ENCODE measurements at regions of chr4 and their contacts with region 1.

Region 1: DNA sequence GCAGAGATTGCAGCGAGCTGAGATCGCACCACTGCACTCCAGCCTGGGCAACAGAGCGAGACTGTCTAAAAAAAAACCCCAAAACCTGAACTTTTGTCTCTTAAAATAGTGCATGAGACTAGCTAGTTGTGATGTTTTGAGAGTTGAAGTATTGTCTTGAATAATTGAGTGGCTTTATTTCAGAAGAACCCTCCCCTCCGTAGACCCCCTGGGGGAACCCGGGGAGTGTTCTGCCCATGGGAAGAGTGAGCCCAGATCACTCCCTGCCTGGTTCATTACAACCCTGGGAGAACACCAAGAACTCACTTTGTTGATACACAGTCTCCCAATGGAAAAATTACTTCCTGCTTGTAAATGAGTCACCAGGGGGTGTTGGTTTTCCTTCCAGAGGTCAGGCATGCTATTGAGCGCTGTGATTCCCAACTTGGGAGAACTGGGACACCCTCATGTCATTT is 65.3 kb upstream of the SHISA3 start:
- DNase-seq: no peak
- ATAC-seq: no peak
- H3K4me3 ChIP-seq: no peak overlapping the region
- H3K4me3 Mint-ChIP-seq: no peak overlapping the region
- H3K27ac ChIP-seq: no peak overlapping the region
- H3K27ac Mint-ChIP-seq: no peak overlapping the region
- H3K4me1 ChIP-seq: no peaks in the 10 kb centered on the region
- H3K4me1 Mint-ChIP-seq: no peaks in the 10 kb centered on the region
- H3K27me3 ChIP-seq: no peaks in the 10 kb centered on the region
- H3K27me3 Mint-ChIP-seq: peaks cover 0 to 9% of the 10 kb centered on the region in 2 donors

Region 2: GRCh38 chr4:42074294-42074693 is 257.6 kb before region 1 on chr4:
- CTCF ChIA-PET with region 1: no interaction called
- POLR2A ChIA-PET with region 1: interaction called in 1 of 2 experiments, 12 read pairs
- DNase-seq: no peak
- ATAC-seq: no peak
- H3K4me3 ChIP-seq: no peak overlapping the region
- H3K4me3 Mint-ChIP-seq: no peak overlapping the region
- H3K27ac ChIP-seq: no peak overlapping the region
- H3K27ac Mint-ChIP-seq: no peak overlapping the region
- H3K4me1 ChIP-seq: no peaks in the 10 kb centered on the region
- H3K4me1 Mint-ChIP-seq: no peaks in the 10 kb centered on the region
- H3K27me3 ChIP-seq: no peaks in the 10 kb centered on the region
- H3K27me3 Mint-ChIP-seq: no peaks in the 10 kb centered on the region

Region 3: DNA sequence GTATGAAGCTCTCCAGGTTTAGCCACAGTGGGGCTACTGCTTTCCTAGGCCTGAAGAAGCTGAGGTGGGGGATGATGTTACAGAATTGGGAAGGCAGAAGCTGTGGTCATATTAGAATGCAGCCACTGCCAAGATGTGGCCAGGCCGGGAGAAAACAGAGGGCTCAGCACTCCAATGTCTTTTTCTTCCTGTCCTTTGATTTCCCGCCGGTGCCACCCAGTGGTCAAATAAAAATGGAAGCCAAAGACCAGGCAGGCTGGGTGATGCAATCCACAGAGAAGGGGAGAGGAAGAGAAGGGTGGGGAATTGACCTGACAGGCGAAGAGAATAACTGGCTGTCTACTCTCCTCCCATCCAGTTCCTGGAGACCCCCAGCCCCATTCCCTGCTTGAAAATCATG is 29.6 kb before region 1 on chr4:
- CTCF ChIA-PET with region 1: no interaction called
- POLR2A ChIA-PET with region 1: no interaction called
- DNase-seq: no peak
- ATAC-seq: no peak
- H3K4me3 ChIP-seq: no peak overlapping the region
- H3K4me3 Mint-ChIP-seq: no peak overlapping the region
- H3K27ac ChIP-seq: no peak overlapping the region
- H3K27ac Mint-ChIP-seq: no peak overlapping the region
- H3K4me1 ChIP-seq: no peaks in the 10 kb centered on the region
- H3K4me1 Mint-ChIP-seq: no peaks in the 10 kb centered on the region
- H3K27me3 ChIP-seq: no peaks in the 10 kb centered on the region
- H3K27me3 Mint-ChIP-seq: peaks cover 27 to 36% of the 10 kb centered on the region in 2 donors

Measured in T-cell (primary cell).